KBM-7 (cell line): ENCODE measurements at regions of chr21 and their contacts with region 1.

Region 1: GRCh38 chr21:44892536-44893277 is 19.2 kb upstream of the PTTG1IP start:
- DNase-seq: peak; percentile 75

Region 2: GRCh38 chr21:44370027-44370735 is 522.5 kb before region 1 on chr21:
- in situ Hi-C with region 1: loop called (anchors 25 kb)
- DNase-seq: no peak